Right ventricle myocardium inferior (tissue), 1 donor: ENCODE measurements at regions of chr5 and their contacts with region 1.

Region 1: GRCh38 chr5:72366324-72366976 is 46.3 kb downstream of the PTCD2 start:
- DNase-seq: no peak
- ATAC-seq: peak; percentile 90

Region 2: GRCh38 chr5:72417333-72418207 is 51.1 kb after region 1 on chr5:
- intact Hi-C with region 1: no loop called
- DNase-seq: no peak
- ATAC-seq: no peak

Region 3: DNA sequence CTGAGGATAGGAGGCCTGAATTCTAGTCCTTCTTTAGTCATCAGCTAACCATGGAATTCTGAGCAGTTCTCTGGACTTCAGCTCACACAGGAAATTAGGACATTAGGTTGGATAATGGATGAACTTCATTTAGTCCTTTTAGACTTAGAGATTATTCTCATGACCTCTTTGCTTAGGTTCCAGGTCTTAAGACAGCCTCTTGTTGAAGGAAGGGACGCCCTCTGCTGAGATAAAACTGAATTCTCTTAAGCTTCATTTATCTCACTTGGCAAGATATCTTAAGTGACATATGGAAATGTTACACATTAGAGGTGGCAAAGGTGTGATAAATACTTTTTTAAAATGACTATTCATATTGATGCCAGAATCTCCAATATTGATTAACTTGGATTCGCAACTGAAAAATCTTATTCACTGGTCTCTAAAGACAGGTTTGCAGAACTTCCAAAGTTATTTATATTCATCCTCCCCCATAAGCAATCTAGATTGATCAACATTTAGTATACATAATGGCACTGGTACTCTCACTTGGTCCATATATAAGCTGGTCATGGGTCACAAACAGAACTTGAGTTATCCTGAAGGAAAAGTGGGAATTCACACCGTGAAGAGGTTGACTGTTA is 157.6 kb after region 1 on chr5:
- intact Hi-C with region 1: loop called (anchors 1 kb)
- DNase-seq: no peak
- ATAC-seq: peak; percentile 79

Region 4: GRCh38 chr5:73280821-73281746 is 914.6 kb after region 1 on chr5:
- intact Hi-C with region 1: no loop called
- DNase-seq: no peak
- ATAC-seq: no peak